ENCODE measurements at regions of chr3 and their contacts with region 1.

Region 1: GRCh38 chr3:59212128-59212779 is 162.4 kb upstream of the CFAP20DC start:
- DNase-seq: no peak
- H3K4me3 Mint-ChIP-seq: no peak overlapping the region
- H3K27ac Mint-ChIP-seq: no peak overlapping the region
- H3K4me1 Mint-ChIP-seq: peaks cover 2% of the 10 kb centered on the region
- H3K27me3 Mint-ChIP-seq: no peaks in the 10 kb centered on the region

Region 2: GRCh38 chr3:58988041-58988440 is 224.2 kb before region 1 on chr3:
- CTCF ChIA-PET with region 1: no interaction called
- intact Hi-C with region 1: no loop called
- DNase-seq: no peak
- H3K4me3 Mint-ChIP-seq: no peak overlapping the region
- H3K27ac Mint-ChIP-seq: no peak overlapping the region
- H3K4me1 Mint-ChIP-seq: no peaks in the 10 kb centered on the region
- H3K27me3 Mint-ChIP-seq: peaks cover 6% of the 10 kb centered on the region

Region 3: GRCh38 chr3:59313365-59313764 is 101.1 kb after region 1 on chr3:
- CTCF ChIA-PET with region 1: interaction called, 4 read pairs
- intact Hi-C with region 1: loop called (anchors 5 kb)
- DNase-seq: peak; percentile 74
- H3K4me3 Mint-ChIP-seq: no peak overlapping the region
- H3K27ac Mint-ChIP-seq: no peak overlapping the region
- H3K4me1 Mint-ChIP-seq: peaks cover 22% of the 10 kb centered on the region
- H3K27me3 Mint-ChIP-seq: no peaks in the 10 kb centered on the region

Region 4: DNA sequence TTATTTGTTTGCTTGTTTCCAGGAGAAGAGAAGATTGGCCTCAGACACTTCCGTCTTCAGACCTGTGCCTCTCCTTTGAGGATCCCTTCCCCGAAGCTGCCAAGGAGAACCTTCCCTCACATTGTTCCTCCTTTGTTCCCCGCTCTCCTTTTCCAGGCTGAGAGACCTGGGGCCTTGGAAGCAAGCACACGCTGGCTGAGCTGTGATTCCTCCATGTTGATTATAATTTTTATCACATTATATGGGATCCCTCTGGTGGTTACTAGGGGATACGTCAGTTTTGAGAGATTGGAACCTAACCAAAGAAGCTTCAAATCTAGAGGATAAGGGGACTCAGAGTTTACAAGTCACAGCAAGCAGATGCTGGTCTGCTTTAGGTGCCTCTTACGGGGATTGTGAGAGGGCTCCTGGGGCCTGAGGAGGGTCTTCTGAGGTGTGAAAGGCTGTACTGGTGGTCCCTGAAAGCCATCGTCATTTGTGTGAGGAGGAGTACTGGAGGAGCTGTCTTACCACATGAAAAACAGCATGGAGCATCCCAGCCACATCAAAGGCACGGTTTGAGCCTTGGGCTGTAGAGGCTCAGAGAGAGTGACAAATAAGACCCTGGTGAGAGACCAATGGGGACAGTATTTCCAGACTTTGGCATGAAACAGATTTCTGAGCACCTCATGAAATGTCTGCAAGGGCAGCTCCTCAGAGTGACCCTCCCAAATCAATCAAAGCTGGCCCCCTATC is 597.6 kb after region 1 on chr3:
- CTCF ChIA-PET with region 1: no interaction called
- intact Hi-C with region 1: loop called (anchors 1 kb)
- DNase-seq: no peak
- H3K4me3 Mint-ChIP-seq: no peak overlapping the region
- H3K27ac Mint-ChIP-seq: no peak overlapping the region
- H3K4me1 Mint-ChIP-seq: peaks cover 25% of the 10 kb centered on the region
- H3K27me3 Mint-ChIP-seq: no peaks in the 10 kb centered on the region

Measured in activated naive CD4-positive, alpha-beta T cell treated with anti-CD3 and anti-CD28 coated beads for 36 hours (primary cell).